ENCODE measurements at regions of chr1 and their contacts with region 1.

Region 1: GRCh38 chr1:168082008-168082876 is 54.5 kb downstream of the GPR161 start:
- DNase-seq: peak in 1 of 2 donors; percentile 86
- H3K4me3 ChIP-seq: no peak overlapping the region
- H3K27ac ChIP-seq: peak overlapping the region; percentile 22 to 70
- H3K4me1 ChIP-seq: peaks cover 6 to 35% of the 10 kb centered on the region in 2 donors
- H3K27me3 ChIP-seq: no peaks in the 10 kb centered on the region
- CTCF ChIP-seq: peak; percentile 75 to 88 (median 86)

Region 2: DNA sequence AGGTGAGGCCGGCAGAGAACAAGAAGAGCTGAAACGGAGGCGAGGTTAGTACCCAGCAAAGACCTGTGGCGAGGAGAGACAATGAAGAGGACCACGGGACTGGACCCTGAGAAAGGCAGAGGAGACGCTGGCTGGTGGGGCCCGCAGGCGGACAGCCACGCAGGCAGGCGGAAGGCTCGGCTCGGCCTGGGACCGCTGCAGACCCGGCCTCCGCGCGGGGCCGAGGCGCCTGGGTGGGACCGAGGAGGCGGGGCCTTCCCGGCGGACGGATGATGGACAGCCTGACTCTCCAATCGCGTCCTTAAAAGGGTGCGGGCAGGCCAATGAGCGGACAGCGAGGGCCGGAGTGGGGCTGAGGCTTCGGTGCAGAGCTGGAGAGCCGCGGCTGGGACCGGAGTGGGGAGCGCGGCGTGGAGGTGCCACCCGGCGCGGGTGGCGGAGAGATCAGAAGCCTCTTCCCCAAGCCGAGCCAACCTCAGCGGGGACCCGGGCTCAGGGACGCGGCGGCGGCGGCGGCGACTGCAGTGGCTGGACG is 360.6 kb before region 1 on chr1 and contains the start of gene MPZL1:
- intact Hi-C with region 1: loop called (anchors 5 kb)
- DNase-seq: peak; percentile 71 to 98
- H3K4me3 ChIP-seq: peak within 1 kb of the TSS; percentile 86 to 98
- H3K27ac ChIP-seq: peak within 1 kb of the TSS; percentile 89 to 94
- H3K4me1 ChIP-seq: peaks cover 3 to 25% of the 10 kb centered on the region in 2 donors
- H3K27me3 ChIP-seq: no peaks in the 10 kb centered on the region
- CTCF ChIP-seq: no peak
- total RNA-seq, gene MPZL1: 58.9 TPM

Region 3: DNA sequence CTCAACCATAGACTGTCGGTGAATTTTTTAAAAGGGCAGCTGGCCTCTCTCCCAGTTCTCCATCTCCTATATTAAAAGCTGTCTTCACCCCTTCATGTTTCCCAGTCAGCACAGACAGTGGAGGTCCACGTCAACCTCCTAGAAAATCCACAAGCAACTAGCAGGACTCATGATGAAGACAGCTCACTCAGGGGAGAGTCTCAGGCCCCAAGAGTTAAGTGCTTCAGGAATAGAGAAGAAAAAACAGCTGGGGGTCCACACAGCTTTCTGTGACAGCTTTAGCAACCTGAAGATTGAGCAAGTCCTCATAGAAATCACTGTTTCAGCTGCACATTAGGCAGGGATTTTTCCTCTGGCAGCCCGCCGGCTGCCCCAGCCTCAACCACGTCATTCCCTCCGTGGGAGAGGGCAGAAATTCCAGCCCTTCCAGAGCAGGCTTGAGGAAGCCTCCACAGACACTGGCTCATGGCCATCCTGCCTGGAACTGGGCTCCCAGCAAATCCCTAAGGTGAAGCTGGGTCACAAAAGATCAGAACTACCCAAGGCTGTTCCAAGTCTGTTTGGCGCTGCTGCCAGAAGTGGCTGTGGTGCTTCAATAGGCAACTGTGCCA is 39.3 kb after region 1 on chr1:
- intact Hi-C with region 1: loop called (anchors 1 kb)
- DNase-seq: peak in 1 of 2 donors; percentile 89
- H3K4me3 ChIP-seq: no peak overlapping the region
- H3K27ac ChIP-seq: peak overlapping the region; percentile 77 to 81
- H3K4me1 ChIP-seq: peaks cover 0 to 13% of the 10 kb centered on the region in 2 donors
- H3K27me3 ChIP-seq: no peaks in the 10 kb centered on the region
- CTCF ChIP-seq: no peak

Region 4: GRCh38 chr1:168145184-168146159 is 63.2 kb after region 1 on chr1:
- intact Hi-C with region 1: loop called (anchors 2 kb)
- DNase-seq: peak; percentile 40 to 91
- H3K4me3 ChIP-seq: no peak overlapping the region
- H3K27ac ChIP-seq: peak overlapping the region in 1 of 2 donors; percentile 44
- H3K4me1 ChIP-seq: peaks cover 0 to 4% of the 10 kb centered on the region in 2 donors
- H3K27me3 ChIP-seq: no peaks in the 10 kb centered on the region
- CTCF ChIP-seq: peak; percentile 88 to 100 (median 99)

Region 5: GRCh38 chr1:168348146-168348709 is 266.0 kb after region 1 on chr1:
- intact Hi-C with region 1: no loop called
- DNase-seq: no peak
- H3K4me3 ChIP-seq: peak overlapping the region; percentile 40 to 46
- H3K27ac ChIP-seq: no peak overlapping the region
- H3K4me1 ChIP-seq: peaks cover 0 to 5% of the 10 kb centered on the region in 2 donors
- H3K27me3 ChIP-seq: no peaks in the 10 kb centered on the region
- CTCF ChIP-seq: no peak